Breast epithelium (tissue), 4 donors: ENCODE measurements at regions of chr21 and their contacts with region 1.

Region 1: GRCh38 chr21:29342363-29342957 is 43.7 kb downstream of the BACH1 start:
- DNase-seq: no peak
- H3K4me3 ChIP-seq: peak overlapping the region in 1 of 3 donors; percentile 29
- H3K27ac ChIP-seq: peak overlapping the region; percentile 3 to 48
- H3K4me1 ChIP-seq: no peaks in the 10 kb centered on the region
- H3K27me3 ChIP-seq: no peaks in the 10 kb centered on the region
- CTCF ChIP-seq: no peak
- POLR2A ChIP-seq: no peak

Region 2: DNA sequence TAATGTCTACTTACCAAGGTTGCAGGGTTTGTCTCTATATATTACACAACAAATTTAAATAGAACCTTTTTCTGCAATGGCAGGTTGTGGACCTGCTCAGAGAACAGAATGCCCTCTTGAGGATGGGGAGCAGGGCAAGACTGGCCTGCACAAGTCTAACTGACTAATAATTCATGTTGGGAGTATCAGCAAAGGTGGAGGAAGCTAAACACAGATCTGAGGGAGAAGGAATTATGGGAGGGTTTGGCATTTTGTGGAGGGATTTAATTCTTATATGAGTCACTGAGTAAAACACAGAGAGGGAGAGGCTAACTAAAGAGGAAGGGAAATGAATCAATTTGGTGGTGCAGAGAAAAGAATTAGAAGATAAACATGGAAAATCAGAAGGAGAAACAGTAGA is 784.1 kb after region 1 on chr21:
- intact Hi-C with region 1: loop called (anchors 5 kb)
- DNase-seq: no peak
- H3K4me3 ChIP-seq: no peak overlapping the region
- H3K27ac ChIP-seq: no peak overlapping the region
- H3K4me1 ChIP-seq: no peaks in the 10 kb centered on the region
- H3K27me3 ChIP-seq: no peaks in the 10 kb centered on the region
- CTCF ChIP-seq: no peak
- POLR2A ChIP-seq: no peak